HEK293 (cell line): ENCODE measurements at regions of chr19 and their contacts with region 1.

Region 1: GRCh38 chr19:12287958-12288500 is 6.7 kb downstream of the ZNF44 start:
- H3K4me3 ChIP-seq: no peak overlapping the region
- H3K27ac ChIP-seq: no peak overlapping the region
- H3K4me1 ChIP-seq: no peaks in the 10 kb centered on the region
- CTCF ChIP-seq: no peak

Region 2: GRCh38 chr19:12314553-12314952 is 26.5 kb after region 1 on chr19:
- CTCF ChIA-PET with region 1: no interaction called
- POLR2A ChIA-PET with region 1: no interaction called
- H3K4me3 ChIP-seq: no peak overlapping the region
- H3K27ac ChIP-seq: no peak overlapping the region
- H3K4me1 ChIP-seq: no peaks in the 10 kb centered on the region
- CTCF ChIP-seq: no peak

Region 3: DNA sequence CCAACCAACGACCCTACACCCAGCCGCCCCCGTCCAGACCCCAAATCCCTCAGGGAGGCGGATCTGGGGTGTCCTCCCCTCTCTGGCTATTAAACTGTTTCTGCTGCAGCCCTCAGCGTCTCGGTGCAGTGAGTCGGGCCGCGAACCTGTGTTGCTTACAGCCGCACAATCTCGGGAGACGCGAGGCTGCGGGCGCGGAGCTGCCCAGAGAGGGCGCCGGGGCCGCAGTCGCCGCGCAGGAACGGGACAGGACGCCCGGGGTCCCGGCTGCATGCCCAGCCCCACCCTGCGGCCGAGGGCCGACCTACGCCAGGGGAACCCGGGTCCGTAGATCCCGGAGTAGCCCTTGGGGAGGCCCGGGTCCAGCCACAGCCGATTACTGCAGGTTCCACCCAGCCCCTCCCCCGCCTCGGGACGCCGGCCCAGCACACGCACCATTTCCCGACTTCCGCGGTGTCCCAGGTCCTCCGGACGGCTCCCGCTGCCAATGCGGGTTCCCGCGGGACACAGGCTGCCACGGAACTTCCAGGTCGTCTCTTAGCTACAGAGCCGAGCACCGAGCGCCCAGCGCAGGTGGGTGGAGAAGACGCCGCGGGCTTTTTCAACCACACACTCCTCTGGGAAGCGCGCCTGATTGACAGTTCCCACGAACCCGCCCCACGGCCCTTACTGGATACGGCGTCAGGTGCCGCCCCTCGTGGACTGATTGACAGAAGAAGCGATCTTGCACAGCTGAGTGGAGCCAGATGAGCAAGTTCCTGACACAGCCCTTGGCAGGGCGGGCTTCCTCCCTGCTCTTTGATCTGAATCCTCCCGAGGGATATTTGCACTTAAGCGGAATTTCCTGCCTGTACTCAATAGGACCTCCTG is 112.8 kb after region 1 on chr19 and contains the start of gene ZNF799:
- CTCF ChIA-PET with region 1: no interaction called
- POLR2A ChIA-PET with region 1: interaction called, 10 read pairs
- H3K4me3 ChIP-seq: peak within 1 kb of the TSS; percentile 80
- H3K27ac ChIP-seq: no peak within 1 kb of the TSS; the same call in 1 of the 2 replicates
- H3K4me1 ChIP-seq: no peaks in the 10 kb centered on the region
- CTCF ChIP-seq: peak; percentile 72

Region 4: GRCh38 chr19:12721656-12722565 is 433.9 kb after region 1 on chr19:
- CTCF ChIA-PET with region 1: no interaction called
- POLR2A ChIA-PET with region 1: no interaction called
- H3K4me3 ChIP-seq: peak overlapping the region; percentile 79
- H3K27ac ChIP-seq: peak overlapping the region; percentile 97
- H3K4me1 ChIP-seq: no peaks in the 10 kb centered on the region
- CTCF ChIP-seq: no peak